H1 (cell line): ENCODE measurements at regions of chr5 and their contacts with region 1.

Region 1: GRCh38 chr5:134586866-134587524 is 45.6 kb downstream of the SAR1B start:
- DNase-seq: peak; percentile 81 to 99
- H3K4me3 ChIP-seq: 0 out of 8 replicates have a peak overlapping the region, but pooled peaks of 1 of the 4 experiments have one; percentile 38
- H3K27ac ChIP-seq: no peak overlapping the region
- H3K4me1 ChIP-seq: peaks cover 6 to 12% (median 9%) of the 10 kb centered on the region in 4 experiments
- H3K27me3 ChIP-seq: no peaks in the 10 kb centered on the region
- CTCF ChIP-seq: peak in 2 of 3 experiments; percentile 91 to 97; a peak in 3 of 4 replicates
- EP300 ChIP-seq: no peak
- POLR2A ChIP-seq: no peak
- RAD21 ChIP-seq: peak; percentile 89 to 90

Region 2: GRCh38 chr5:134304311-134304710 is 282.7 kb before region 1 on chr5:
- CTCF ChIA-PET with region 1: interaction called, 10 read pairs
- POLR2A ChIA-PET with region 1: interaction called, 3 read pairs
- DNase-seq: no peak
- H3K4me3 ChIP-seq: no peak overlapping the region
- H3K27ac ChIP-seq: no peak overlapping the region
- H3K4me1 ChIP-seq: no peaks in the 10 kb centered on the region
- H3K27me3 ChIP-seq: no peaks in the 10 kb centered on the region
- CTCF ChIP-seq: no peak
- EP300 ChIP-seq: no peak
- POLR2A ChIP-seq: no peak
- RAD21 ChIP-seq: no peak

Region 3: GRCh38 chr5:134430001-134430569 is 156.9 kb before region 1 on chr5:
- CTCF ChIA-PET with region 1: interaction called, 16 read pairs
- POLR2A ChIA-PET with region 1: no interaction called
- DNase-seq: no peak
- H3K4me3 ChIP-seq: peak overlapping the region in 1 of 4 experiments; percentile 44; a peak in 2 of 8 replicates
- H3K27ac ChIP-seq: no peak overlapping the region
- H3K4me1 ChIP-seq: peaks cover 6 to 27% (median 16%) of the 10 kb centered on the region in 4 experiments; a peak in 6 of 7 replicates
- H3K27me3 ChIP-seq: peaks cover 0 to 1% (median 0%) of the 10 kb centered on the region in 4 experiments; a peak in 1 of 7 replicates
- CTCF ChIP-seq: peak in 1 of 3 experiments; percentile 7; a peak in 1 of 4 replicates
- EP300 ChIP-seq: no peak
- POLR2A ChIP-seq: no peak
- RAD21 ChIP-seq: no peak; a peak in 1 of 4 replicates

Region 4: GRCh38 chr5:134547579-134547978 is 39.4 kb before region 1 on chr5:
- CTCF ChIA-PET with region 1: interaction called, 12 read pairs
- POLR2A ChIA-PET with region 1: interaction called, 4 read pairs
- DNase-seq: no peak
- H3K4me3 ChIP-seq: no peak overlapping the region
- H3K27ac ChIP-seq: no peak overlapping the region
- H3K4me1 ChIP-seq: peaks cover 3 to 7% (median 5%) of the 10 kb centered on the region in 4 experiments; a peak in 5 of 7 replicates
- H3K27me3 ChIP-seq: no peaks in the 10 kb centered on the region
- CTCF ChIP-seq: no peak
- EP300 ChIP-seq: no peak
- POLR2A ChIP-seq: no peak
- RAD21 ChIP-seq: no peak

Region 5: DNA sequence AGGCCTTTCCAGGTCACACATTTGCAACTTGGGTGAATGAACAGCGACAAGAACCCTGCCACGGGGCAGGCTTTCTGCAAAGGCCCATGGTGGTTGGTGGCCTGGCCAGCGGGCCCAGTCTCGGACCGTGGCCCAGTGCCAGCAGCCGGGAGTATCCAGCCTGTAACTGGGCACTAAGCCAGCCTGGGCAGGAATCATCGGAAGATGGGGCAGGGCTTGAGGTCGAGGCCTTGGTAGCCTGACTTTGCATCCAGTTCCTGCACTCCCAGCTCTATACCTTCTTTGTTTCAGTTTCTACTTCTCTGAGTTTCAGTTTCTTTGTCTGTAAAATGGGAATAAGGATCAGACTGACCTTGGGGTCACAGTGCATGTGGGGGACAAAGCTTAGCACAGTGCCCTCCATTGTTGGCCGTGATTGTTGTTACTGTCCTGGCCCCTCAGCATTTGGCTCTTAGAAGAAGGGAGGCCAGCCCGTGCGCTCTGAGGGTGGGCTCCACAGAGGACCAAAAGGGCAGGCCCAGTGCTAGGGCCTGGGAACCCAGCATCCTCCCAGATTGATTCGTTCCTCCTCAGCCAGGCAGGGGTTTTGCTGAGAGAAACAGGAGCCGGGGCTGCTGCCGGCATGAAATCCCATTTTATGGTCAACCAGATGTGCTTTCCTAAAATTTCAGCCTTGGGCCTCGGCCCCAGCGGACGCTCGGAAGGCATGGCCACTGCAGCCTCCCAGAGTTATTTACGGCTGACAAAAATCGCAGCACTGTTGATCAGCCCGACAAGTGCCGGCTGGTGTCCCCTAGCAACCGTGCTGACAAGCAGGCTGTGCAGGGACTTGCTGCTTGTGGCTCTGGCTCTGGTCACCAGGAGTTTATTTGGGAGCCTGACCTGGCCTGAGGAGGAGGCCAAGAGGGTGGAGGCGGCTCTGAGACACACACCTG is 18.0 kb before region 1 on chr5:
- CTCF ChIA-PET with region 1: interaction called, 53 read pairs
- POLR2A ChIA-PET with region 1: interaction called, 4 read pairs
- DNase-seq: no peak
- H3K4me3 ChIP-seq: no peak overlapping the region
- H3K27ac ChIP-seq: no peak overlapping the region; the same call in 1 of the 2 replicates
- H3K4me1 ChIP-seq: no peaks in the 10 kb centered on the region
- H3K27me3 ChIP-seq: no peaks in the 10 kb centered on the region
- CTCF ChIP-seq: no peak
- EP300 ChIP-seq: no peak
- POLR2A ChIP-seq: no peak
- RAD21 ChIP-seq: no peak

Region 6: GRCh38 chr5:134637161-134637582 is 50.2 kb after region 1 on chr5:
- CTCF ChIA-PET with region 1: interaction called, 24 read pairs
- POLR2A ChIA-PET with region 1: interaction called, 4 read pairs
- DNase-seq: no peak
- H3K4me3 ChIP-seq: no peak overlapping the region
- H3K27ac ChIP-seq: no peak overlapping the region
- H3K4me1 ChIP-seq: no peaks in the 10 kb centered on the region
- H3K27me3 ChIP-seq: no peaks in the 10 kb centered on the region
- CTCF ChIP-seq: no peak
- EP300 ChIP-seq: no peak
- POLR2A ChIP-seq: no peak
- RAD21 ChIP-seq: no peak

Region 7: DNA sequence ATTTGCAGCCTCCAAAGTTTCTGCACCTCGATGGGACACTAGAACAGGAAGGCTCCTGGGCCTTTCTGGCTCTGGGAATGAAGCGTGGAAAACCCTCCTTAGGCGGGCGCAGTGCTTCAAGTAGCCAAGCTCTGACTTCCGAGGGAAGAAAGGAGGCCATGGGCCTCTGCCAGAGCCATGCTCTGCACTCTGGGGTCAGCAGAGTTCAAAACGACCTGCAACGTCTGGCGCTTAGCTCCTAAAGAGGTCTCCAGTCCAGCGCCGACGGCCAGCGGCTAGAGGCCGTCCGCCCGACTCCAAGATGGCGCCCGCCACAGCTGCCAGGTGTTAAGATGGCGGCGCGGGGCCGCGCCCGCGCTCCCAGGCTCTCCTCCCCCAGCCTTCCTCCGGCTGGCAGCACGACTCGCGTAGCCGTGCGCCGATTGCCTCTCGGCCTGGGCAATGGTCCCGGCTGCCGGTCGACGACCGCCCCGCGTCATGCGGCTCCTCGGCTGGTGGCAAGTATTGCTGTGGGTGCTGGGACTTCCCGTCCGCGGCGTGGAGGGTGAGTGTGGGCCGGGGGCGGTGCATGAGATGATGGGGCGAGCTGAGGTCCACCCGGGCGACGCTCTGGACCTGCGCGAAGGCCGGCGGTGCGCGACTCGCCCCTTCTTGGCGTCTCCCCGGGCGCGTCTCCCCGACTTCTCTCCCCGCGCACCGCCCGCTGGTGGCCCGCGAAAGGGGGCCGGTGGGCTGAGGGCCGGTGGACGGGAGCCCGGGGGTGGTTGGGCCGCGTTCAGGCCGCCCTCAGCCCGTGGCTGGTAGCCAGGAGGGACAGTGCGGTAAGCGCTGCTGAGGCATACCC is 287.2 kb after region 1 on chr5 and contains the start of gene TXNDC15:
- CTCF ChIA-PET with region 1: no interaction called
- POLR2A ChIA-PET with region 1: no interaction called
- DNase-seq: peak; percentile 61 to 89
- H3K4me3 ChIP-seq: peak within 1 kb of the TSS; percentile 73 to 93 (median 78)
- H3K27ac ChIP-seq: peak within 1 kb of the TSS; percentile 79; the same call in 1 of the 2 replicates
- H3K4me1 ChIP-seq: peaks cover 0 to 12% (median 8%) of the 10 kb centered on the region in 4 experiments; a peak in 6 of 7 replicates
- H3K27me3 ChIP-seq: no peaks in the 10 kb centered on the region
- CTCF ChIP-seq: no peak
- EP300 ChIP-seq: no peak
- POLR2A ChIP-seq: peak in 1 of 2 experiments; percentile 91; a peak in 2 of 3 replicates
- RAD21 ChIP-seq: no peak
- total RNA-seq, gene TXNDC15: 30.8 and 34.5 TPM in 2 replicates